ENCODE measurements at regions of chr2 and their contacts with region 1.

Region 1: GRCh38 chr2:31219131-31219969 is 2.0 kb upstream of the CAPN14 start:
- DNase-seq: peak; percentile 87
- ATAC-seq: peak; percentile 77
- H3K4me3 ChIP-seq: peak overlapping the region in 4 of 5 experiments; percentile 2 to 33 (median 16)
- H3K4me3 Mint-ChIP-seq: peak overlapping the region; percentile 79
- H3K27ac ChIP-seq: peak overlapping the region; percentile 93 to 97
- H3K27ac Mint-ChIP-seq: peak overlapping the region; percentile 96
- H3K4me1 ChIP-seq: peaks cover 84 to 89% of the 10 kb centered on the region in 2 donors
- H3K4me1 Mint-ChIP-seq: peaks cover 93% of the 10 kb centered on the region
- H3K27me3 ChIP-seq: no peaks in the 10 kb centered on the region
- H3K27me3 Mint-ChIP-seq: no peaks in the 10 kb centered on the region
- CTCF ChIP-seq: no peak

Region 2: GRCh38 chr2:30282086-30282485 is 937.3 kb before region 1 on chr2:
- CTCF ChIA-PET with region 1: no interaction called
- POLR2A ChIA-PET with region 1: no interaction called
- intact Hi-C with region 1: loop called (anchors 5 kb)
- DNase-seq: peak; percentile 89
- ATAC-seq: peak; percentile 98
- H3K4me3 ChIP-seq: peak overlapping the region in 2 of 5 experiments; percentile 11 to 40
- H3K4me3 Mint-ChIP-seq: peak overlapping the region; percentile 66
- H3K27ac ChIP-seq: peak overlapping the region; percentile 75 to 88
- H3K27ac Mint-ChIP-seq: peak overlapping the region; percentile 92
- H3K4me1 ChIP-seq: peaks cover 89 to 94% of the 10 kb centered on the region in 2 donors
- H3K4me1 Mint-ChIP-seq: peaks cover 91% of the 10 kb centered on the region
- H3K27me3 ChIP-seq: no peaks in the 10 kb centered on the region
- H3K27me3 Mint-ChIP-seq: no peaks in the 10 kb centered on the region
- CTCF ChIP-seq: no peak

Region 3: DNA sequence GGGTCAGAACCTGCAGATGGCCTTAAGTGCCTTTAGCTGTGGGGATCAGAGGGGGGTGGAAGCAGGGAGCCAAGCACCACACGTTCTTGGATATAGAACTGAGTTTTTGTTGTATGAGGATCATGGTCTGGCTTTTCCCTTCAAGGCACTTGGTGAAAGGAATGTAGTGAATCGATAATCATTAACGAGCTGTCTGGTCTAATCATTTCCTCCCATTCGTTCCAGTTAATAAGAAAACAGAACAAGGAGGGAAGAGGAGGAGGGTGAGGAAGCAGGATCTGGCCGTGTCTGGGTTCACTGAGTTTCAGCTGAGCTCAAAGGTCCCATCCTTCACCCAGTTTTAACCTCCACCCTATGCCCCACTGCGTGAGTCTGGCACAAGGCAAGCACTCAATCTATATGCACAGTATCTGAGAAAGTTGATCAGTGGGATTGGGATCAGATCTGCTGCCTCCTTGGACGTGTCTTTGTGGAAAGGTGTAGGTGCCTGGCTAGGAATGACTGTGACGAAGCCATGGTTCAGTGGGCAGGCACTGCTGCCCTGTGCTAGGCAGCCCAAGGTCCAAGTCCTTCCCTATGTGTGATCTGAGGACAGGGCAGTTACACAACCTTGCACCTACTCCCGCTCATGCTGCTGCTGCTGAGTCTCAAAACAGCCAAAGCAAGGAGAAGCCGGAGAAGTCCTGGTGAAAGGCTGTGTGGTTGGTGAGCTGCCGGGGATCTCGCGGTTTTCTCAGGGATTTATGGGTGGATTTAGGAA is 135.9 kb before region 1 on chr2:
- CTCF ChIA-PET with region 1: no interaction called
- POLR2A ChIA-PET with region 1: no interaction called
- intact Hi-C with region 1: no loop called
- DNase-seq: no peak
- ATAC-seq: no peak
- H3K4me3 ChIP-seq: no peak overlapping the region
- H3K4me3 Mint-ChIP-seq: no peak overlapping the region
- H3K27ac ChIP-seq: no peak overlapping the region
- H3K27ac Mint-ChIP-seq: no peak overlapping the region
- H3K4me1 ChIP-seq: no peaks in the 10 kb centered on the region
- H3K4me1 Mint-ChIP-seq: no peaks in the 10 kb centered on the region
- H3K27me3 ChIP-seq: no peaks in the 10 kb centered on the region
- H3K27me3 Mint-ChIP-seq: no peaks in the 10 kb centered on the region
- CTCF ChIP-seq: no peak

Region 4: GRCh38 chr2:31138037-31138962 is 81.0 kb before region 1 on chr2 and contains the start of gene GALNT14:
- CTCF ChIA-PET with region 1: interaction called, 6 read pairs
- POLR2A ChIA-PET with region 1: no interaction called
- intact Hi-C with region 1: loop called (anchors 5 kb)
- DNase-seq: peak; percentile 77
- ATAC-seq: peak; percentile 78
- H3K4me3 ChIP-seq: peak within 1 kb of the TSS; percentile 56 to 81 (median 60)
- H3K4me3 Mint-ChIP-seq: peak within 1 kb of the TSS; percentile 90
- H3K27ac ChIP-seq: no peak within 1 kb of the TSS
- H3K27ac Mint-ChIP-seq: peak within 1 kb of the TSS; percentile 26
- H3K4me1 ChIP-seq: peaks cover 15 to 16% of the 10 kb centered on the region in 2 donors
- H3K4me1 Mint-ChIP-seq: peaks cover 17% of the 10 kb centered on the region
- H3K27me3 ChIP-seq: peaks cover 0 to 11% (median 7%) of the 10 kb centered on the region in 4 experiments
- H3K27me3 Mint-ChIP-seq: peaks cover 21% of the 10 kb centered on the region
- CTCF ChIP-seq: peak; percentile 60
- total RNA-seq, gene GALNT14: 4.9 and 6.2 TPM in 2 replicates

Region 5: GRCh38 chr2:31233741-31234682 is 14.7 kb after region 1 on chr2 and contains the start of gene EHD3:
- CTCF ChIA-PET with region 1: interaction called, 23 read pairs
- POLR2A ChIA-PET with region 1: interaction called, 15 read pairs
- intact Hi-C with region 1: loop called (anchors 1 kb)
- DNase-seq: peak; percentile 86
- ATAC-seq: peak; percentile 97
- H3K4me3 ChIP-seq: peak within 1 kb of the TSS; percentile 46 to 79 (median 70)
- H3K4me3 Mint-ChIP-seq: peak within 1 kb of the TSS; percentile 94
- H3K27ac ChIP-seq: peak within 1 kb of the TSS; percentile 62 to 69
- H3K27ac Mint-ChIP-seq: peak within 1 kb of the TSS; percentile 80
- H3K4me1 ChIP-seq: peaks cover 28 to 35% of the 10 kb centered on the region in 2 donors
- H3K4me1 Mint-ChIP-seq: peaks cover 45% of the 10 kb centered on the region
- H3K27me3 ChIP-seq: no peaks in the 10 kb centered on the region
- H3K27me3 Mint-ChIP-seq: no peaks in the 10 kb centered on the region
- CTCF ChIP-seq: no peak
- total RNA-seq, gene EHD3: 60.4 and 60.5 TPM in 2 replicates

Region 6: GRCh38 chr2:31255911-31256571 is 36.7 kb after region 1 on chr2:
- CTCF ChIA-PET with region 1: interaction called, 17 read pairs
- POLR2A ChIA-PET with region 1: interaction called, 15 read pairs
- intact Hi-C with region 1: loop called (anchors 1 kb)
- DNase-seq: peak; percentile 54
- ATAC-seq: peak; percentile 65
- H3K4me3 ChIP-seq: peak overlapping the region in 3 of 5 experiments; percentile 12 to 26 (median 22)
- H3K4me3 Mint-ChIP-seq: peak overlapping the region; percentile 83
- H3K27ac ChIP-seq: peak overlapping the region; percentile 51 to 60
- H3K27ac Mint-ChIP-seq: peak overlapping the region; percentile 96
- H3K4me1 ChIP-seq: peaks cover 78 to 86% of the 10 kb centered on the region in 2 donors
- H3K4me1 Mint-ChIP-seq: peaks cover 83% of the 10 kb centered on the region
- H3K27me3 ChIP-seq: no peaks in the 10 kb centered on the region
- H3K27me3 Mint-ChIP-seq: no peaks in the 10 kb centered on the region
- CTCF ChIP-seq: no peak

Region 7: GRCh38 chr2:31318361-31319336 is 99.3 kb after region 1 on chr2:
- CTCF ChIA-PET with region 1: no interaction called
- POLR2A ChIA-PET with region 1: no interaction called
- intact Hi-C with region 1: loop called (anchors 5 kb)
- DNase-seq: peak; percentile 47
- ATAC-seq: peak; percentile 92
- H3K4me3 ChIP-seq: peak overlapping the region in 1 of 5 experiments; percentile 31
- H3K4me3 Mint-ChIP-seq: peak overlapping the region; percentile 67
- H3K27ac ChIP-seq: peak overlapping the region; percentile 11 to 65
- H3K27ac Mint-ChIP-seq: peak overlapping the region; percentile 89
- H3K4me1 ChIP-seq: peaks cover 31% of the 10 kb centered on the region in 2 donors
- H3K4me1 Mint-ChIP-seq: peaks cover 51% of the 10 kb centered on the region
- H3K27me3 ChIP-seq: no peaks in the 10 kb centered on the region
- H3K27me3 Mint-ChIP-seq: no peaks in the 10 kb centered on the region
- CTCF ChIP-seq: no peak

Region 8: DNA sequence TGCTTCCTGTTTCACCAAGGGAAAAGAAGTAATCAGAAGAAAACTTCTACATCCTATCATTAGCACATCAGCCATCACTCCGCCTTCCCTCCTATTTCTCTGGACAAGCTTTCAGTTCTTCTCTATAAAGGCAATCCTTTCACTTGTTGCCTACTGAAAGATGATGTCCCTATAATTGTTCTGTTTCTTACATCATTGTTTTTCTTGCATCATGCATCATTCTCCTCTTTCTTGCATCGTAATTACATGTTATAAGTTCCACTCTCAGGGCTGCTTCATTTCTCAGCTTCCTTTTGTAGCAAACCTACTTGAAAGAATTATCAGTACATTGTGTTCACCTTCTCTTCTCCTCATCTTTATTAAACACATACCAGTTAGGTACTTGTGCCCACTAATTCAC is 953.5 kb after region 1 on chr2:
- CTCF ChIA-PET with region 1: no interaction called
- POLR2A ChIA-PET with region 1: no interaction called
- intact Hi-C with region 1: no loop called
- DNase-seq: no peak
- ATAC-seq: no peak
- H3K4me3 ChIP-seq: no peak overlapping the region
- H3K4me3 Mint-ChIP-seq: no peak overlapping the region
- H3K27ac ChIP-seq: no peak overlapping the region
- H3K27ac Mint-ChIP-seq: no peak overlapping the region
- H3K4me1 ChIP-seq: no peaks in the 10 kb centered on the region
- H3K4me1 Mint-ChIP-seq: peaks cover 8% of the 10 kb centered on the region
- H3K27me3 ChIP-seq: no peaks in the 10 kb centered on the region
- H3K27me3 Mint-ChIP-seq: no peaks in the 10 kb centered on the region
- CTCF ChIP-seq: no peak

Region 9: DNA sequence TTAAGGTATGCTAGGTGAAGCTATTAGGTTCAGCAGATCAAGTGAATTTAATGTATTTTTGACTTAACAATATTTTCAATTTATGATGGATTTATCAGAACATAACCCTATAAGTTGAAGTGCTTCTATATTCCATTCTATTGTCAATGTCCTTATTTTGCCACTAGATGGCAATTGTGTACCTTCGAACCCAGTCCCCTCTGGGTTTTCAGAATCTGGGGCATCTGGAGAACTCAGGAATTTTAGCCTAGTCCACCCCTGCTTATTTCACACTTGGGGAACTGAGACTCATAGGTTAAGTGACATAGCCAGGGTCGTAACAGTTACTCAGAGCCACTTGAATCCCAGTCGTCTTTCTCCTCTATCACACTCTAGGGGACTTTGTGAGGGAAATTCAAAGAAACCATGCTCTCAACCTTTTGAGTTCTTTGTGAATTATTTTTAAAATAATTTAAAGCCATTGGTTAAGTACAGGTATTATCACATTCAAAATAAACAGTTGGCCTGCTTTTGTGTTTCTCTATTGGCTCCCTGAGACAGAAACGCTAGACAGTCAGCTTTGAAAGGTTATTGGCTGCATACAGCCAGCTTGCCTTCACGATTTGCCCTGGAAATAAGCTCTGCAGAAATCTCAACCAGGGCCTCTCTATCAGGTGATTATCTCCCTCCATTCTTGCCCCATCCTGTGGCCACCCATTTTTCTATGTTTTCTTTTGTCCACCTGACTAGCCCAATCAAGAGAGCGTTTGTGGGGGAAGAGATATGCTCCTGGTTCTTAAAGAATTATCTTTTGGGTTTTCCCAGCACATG is 1553.5 kb after region 1 on chr2:
- CTCF ChIA-PET with region 1: no interaction called
- POLR2A ChIA-PET with region 1: no interaction called
- intact Hi-C with region 1: no loop called
- DNase-seq: peak; percentile 17
- ATAC-seq: no peak
- H3K4me3 ChIP-seq: no peak overlapping the region
- H3K4me3 Mint-ChIP-seq: no peak overlapping the region
- H3K27ac ChIP-seq: no peak overlapping the region
- H3K27ac Mint-ChIP-seq: no peak overlapping the region
- H3K4me1 ChIP-seq: no peaks in the 10 kb centered on the region
- H3K4me1 Mint-ChIP-seq: no peaks in the 10 kb centered on the region
- H3K27me3 ChIP-seq: no peaks in the 10 kb centered on the region
- H3K27me3 Mint-ChIP-seq: no peaks in the 10 kb centered on the region
- CTCF ChIP-seq: peak; percentile 53

Measured in B cell (primary cell).